Left lung (tissue), 14 donors: ENCODE measurements at regions of chr1 and their contacts with region 1.

Region 1: DNA sequence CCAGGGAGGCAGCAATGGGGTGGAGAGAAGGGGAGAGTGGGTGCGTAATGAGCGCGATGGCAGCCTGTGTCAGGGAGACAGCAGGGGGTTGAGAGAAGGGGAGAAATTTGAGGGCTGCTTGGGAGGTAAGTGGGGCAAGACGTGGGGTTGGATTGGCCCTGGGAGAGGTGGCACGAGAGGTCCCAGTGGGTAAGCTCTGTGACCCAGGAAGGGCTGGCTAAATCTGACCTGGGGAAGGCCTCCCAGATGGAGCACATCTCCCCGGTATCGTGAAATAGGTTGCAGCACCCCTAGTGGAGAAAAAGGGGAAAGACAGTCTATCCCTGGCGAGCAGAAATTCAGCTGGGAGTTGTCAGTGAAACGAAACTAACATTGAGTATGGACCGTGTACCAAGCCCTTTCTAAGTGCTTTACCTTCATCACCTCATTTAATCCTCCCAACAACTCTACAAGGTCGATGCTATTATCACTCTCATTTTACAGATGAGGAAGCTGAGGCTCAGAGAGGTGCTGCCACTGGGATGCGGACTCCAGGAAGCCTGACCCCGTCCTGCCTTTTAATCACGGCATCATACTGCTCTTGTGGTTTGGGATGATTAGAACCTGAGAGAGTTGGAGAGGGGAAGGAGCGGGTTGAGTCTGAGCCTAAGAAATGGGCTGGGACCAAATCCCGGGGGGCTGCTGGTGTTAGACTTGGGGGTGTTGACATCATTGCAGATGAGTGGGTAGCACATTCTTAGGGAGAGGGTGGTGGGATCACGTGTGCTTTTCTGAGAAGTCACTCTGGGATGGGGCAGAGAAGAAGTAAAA is 56.6 kb upstream of the RPL11 start:
- DNase-seq: peak; percentile 43 to 80 (median 54)
- ATAC-seq: peak; percentile 88
- H3K4me3 ChIP-seq: peak overlapping the region in 1 of 2 donors; percentile 34
- H3K27ac ChIP-seq: peak overlapping the region; percentile 67 to 78
- H3K4me1 ChIP-seq: peaks cover 0 to 20% of the 10 kb centered on the region in 2 donors
- H3K27me3 ChIP-seq: no peaks in the 10 kb centered on the region
- CTCF ChIP-seq: peak; percentile 89 to 98

Region 2: DNA sequence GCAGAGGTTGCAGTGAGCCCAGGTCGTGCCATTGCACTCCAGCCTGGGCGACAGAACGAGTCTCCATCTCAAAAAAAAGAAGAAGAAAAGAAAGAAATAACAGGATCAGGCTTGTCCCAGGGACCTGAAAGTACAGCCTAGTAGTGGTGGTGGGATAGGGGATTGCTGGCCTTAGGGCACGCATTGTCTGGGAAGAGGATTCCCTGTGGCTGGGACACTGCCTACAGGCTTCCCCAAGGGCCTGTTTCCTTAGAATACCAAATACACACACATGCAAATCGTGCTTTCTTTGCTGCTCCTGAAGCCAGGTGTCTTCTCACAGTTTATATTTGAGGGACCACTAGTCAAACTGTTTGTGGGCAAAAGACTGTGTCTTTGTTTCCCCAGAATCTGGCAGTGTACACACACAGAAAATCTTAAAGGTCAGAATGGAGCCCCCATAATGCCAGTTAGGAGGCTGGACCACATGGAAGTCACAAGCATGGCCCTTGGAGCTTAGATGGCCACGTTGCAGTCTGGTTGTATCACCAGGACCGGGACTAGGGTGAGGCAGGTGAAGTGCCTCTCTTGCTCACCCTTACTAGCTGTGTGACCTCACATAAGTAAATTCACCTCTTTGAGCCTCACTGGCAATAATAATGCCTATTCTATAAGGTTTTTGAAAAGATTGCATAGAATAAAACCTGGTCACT is 138.4 kb before region 1 on chr1:
- intact Hi-C with region 1: loop called in 1 of 2 experiments (anchors 5 kb)
- DNase-seq: peak in 1 of 4 donors; percentile 19
- ATAC-seq: no peak
- H3K4me3 ChIP-seq: no peak overlapping the region
- H3K27ac ChIP-seq: no peak overlapping the region
- H3K4me1 ChIP-seq: peaks cover 0 to 14% of the 10 kb centered on the region in 2 donors
- H3K27me3 ChIP-seq: no peaks in the 10 kb centered on the region
- CTCF ChIP-seq: no peak

Region 3: GRCh38 chr1:23825076-23825761 is 190.2 kb after region 1 on chr1 and contains the start of gene HMGCL:
- intact Hi-C with region 1: no loop called
- DNase-seq: peak; percentile 88 to 96 (median 94)
- ATAC-seq: peak; percentile 100
- H3K4me3 ChIP-seq: peak within 1 kb of the TSS; percentile 77 to 95
- H3K27ac ChIP-seq: peak within 1 kb of the TSS; percentile 92 to 93
- H3K4me1 ChIP-seq: peaks cover 5 to 14% of the 10 kb centered on the region in 2 donors
- H3K27me3 ChIP-seq: no peaks in the 10 kb centered on the region
- CTCF ChIP-seq: no peak
- polyA plus RNA-seq, gene HMGCL: 32.3 to 37.1 (median 34.8) TPM